ENCODE measurements at regions of chr2 and their contacts with region 1.

Region 1: DNA sequence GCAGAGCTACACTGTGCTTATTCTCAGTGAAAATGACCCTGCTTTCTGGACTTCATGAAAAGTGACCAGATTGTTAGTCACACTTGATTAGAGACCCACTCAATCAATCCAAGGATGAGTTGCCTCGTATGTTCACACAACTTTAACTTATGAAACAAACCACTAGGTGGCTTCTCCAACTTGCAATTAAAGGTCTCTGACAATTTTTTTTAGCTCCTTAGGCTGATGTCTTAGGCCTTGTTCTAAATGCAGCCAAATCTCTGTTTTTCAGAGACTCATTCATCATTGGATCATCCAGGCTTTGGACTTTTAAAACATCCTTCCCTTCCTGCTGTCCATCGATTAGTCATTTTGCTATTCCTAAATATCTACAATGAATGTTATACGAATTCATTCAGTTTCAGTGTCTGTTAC is 63.4 kb downstream of the MREG start:
- DNase-seq: no peak
- ATAC-seq: no peak
- H3K4me3 ChIP-seq: no peak overlapping the region
- H3K27ac ChIP-seq: no peak overlapping the region
- H3K4me1 ChIP-seq: no peaks in the 10 kb centered on the region
- H3K27me3 ChIP-seq: no peaks in the 10 kb centered on the region
- CTCF ChIP-seq: peak in 7 of 9 donors; percentile 30 to 49 (median 35)

Region 2: DNA sequence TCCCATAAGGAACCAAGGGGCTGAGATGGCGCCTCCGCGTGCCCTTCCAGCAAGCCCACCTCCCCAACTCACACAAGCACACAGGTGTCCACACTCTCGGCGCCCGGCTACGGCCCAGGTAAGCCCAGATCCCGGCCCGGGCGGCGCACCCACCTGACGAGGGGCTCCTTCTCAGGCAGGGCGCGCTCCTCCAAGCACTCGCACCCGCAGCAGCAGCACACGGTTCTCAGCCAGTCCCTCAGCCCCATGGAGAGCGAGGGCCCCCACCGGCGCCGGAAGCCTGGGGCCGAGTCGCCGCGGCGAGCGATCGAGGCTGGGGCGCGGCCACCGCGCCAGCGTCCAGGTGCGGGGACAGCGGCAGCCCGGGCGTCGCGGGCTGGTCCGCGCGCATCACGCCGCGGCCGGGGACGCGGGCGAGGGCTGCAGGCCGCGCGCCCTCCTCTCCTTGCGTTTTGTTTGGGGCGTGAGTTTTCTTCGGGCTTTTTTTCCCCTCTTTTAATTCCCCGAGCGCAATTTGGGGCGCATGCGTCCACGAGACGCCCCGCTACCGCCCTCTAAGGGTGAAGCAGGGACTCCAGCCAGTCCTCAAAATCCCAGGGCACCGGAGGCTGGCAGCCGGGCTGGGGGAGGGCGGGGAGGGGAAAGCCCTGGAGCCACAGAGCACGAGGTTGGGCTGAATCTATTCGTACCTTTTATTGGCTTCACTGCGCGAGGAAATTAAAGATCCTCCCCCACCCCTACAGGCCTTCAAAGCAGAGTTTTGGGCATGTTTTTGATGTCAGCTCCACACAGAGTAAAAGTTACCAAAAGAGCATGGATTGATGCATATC is 63.3 kb after region 1 on chr2 and contains the start of gene MREG:
- intact Hi-C with region 1: loop called in 1 of 10 experiments (anchors 10 kb)
- DNase-seq: peak; percentile 59 to 67
- ATAC-seq: peak; percentile 64 to 87 (median 68)
- H3K4me3 ChIP-seq: peak within 1 kb of the TSS; percentile 8 to 65 (median 58)
- H3K27ac ChIP-seq: no peak within 1 kb of the TSS
- H3K4me1 ChIP-seq: peaks cover 0 to 17% (median 8%) of the 10 kb centered on the region in 9 donors
- H3K27me3 ChIP-seq: no peaks in the 10 kb centered on the region
- CTCF ChIP-seq: peak; percentile 40 to 74 (median 68)
- total RNA-seq, gene MREG: 0.13 to 1.5 (median 0.38) TPM

Region 3: DNA sequence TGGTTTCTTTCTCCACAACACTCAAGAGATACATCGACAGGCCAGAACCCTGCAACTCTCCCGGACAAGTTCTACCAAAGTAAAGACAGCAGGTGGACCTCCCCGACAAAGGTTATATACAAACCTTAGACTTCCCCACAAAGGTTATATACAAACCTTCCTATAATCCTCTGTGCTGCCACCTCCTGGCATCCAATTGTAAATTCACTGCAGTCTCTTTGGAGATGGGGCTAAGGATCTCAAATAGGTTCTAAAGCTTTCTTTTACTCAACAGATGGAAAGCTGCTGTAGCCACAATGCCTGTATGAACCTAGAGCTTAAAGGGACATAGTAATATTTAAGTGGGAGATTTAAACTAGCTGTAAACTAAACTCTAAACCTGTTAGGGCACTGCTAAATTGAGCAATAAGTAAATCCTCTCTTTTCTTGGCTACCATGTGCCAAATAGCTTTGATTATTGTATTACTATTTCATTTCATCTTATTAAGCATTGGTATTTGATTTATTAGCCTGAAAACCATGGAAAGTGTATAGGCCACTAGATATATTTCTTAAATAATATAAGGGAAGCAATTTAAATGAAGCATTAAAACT is 73.2 kb after region 1 on chr2:
- intact Hi-C with region 1: loop called in 2 of 10 experiments (anchors 5 to 10 kb)
- DNase-seq: no peak
- ATAC-seq: peak in 1 of 8 donors; percentile 56
- H3K4me3 ChIP-seq: no peak overlapping the region
- H3K27ac ChIP-seq: no peak overlapping the region
- H3K4me1 ChIP-seq: no peaks in the 10 kb centered on the region
- H3K27me3 ChIP-seq: no peaks in the 10 kb centered on the region
- CTCF ChIP-seq: peak in 8 of 9 donors; percentile 13 to 67 (median 56)